ENCODE measurements at regions of chr22 and their contacts with region 1.

Region 1: DNA sequence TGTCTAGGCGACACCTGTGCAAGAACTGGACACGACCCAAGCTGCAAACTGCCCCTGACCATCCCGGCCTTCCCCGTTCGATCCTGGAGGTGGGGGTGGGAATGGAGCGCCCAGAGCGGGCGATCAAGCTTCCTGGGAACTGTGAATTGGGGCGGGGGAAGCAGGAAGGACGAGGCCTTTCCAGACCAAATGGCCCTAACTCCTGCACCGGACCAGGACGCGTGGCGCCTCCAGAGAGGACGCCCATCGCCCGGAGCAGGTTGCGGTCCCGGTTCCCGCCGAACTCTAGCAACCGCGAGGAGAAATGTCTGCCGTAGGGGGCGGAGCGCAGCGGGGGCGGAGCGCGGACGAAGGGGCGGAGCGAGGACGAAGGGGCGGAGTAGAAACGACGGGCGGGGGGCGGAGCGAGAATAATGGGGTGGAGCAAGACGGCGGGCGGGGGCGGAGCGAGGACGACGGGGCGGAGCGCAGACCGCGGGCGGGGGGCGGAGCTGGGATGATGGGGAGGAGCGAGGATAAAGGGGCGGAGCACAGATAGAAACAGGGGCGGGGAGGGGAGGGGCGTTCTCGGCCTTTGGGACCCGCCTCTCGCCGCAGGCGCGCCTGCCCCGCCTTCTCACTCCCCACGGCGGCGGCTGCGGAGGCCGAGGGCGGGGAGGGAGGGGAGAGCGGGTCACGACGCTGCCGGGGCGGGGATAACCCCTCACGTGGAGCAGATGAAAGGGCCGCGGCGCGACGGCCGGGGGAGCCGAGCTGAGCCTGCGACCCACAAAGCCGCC is at the start of gene ZNRF3:
- DNase-seq: peak; percentile 94
- H3K4me3 ChIP-seq: peak within 1 kb of the TSS; percentile 72
- H3K4me3 Mint-ChIP-seq: peak within 1 kb of the TSS; percentile 83
- H3K27ac Mint-ChIP-seq: peak within 1 kb of the TSS; percentile 93
- H3K4me1 ChIP-seq: peaks cover 35% of the 10 kb centered on the region
- H3K4me1 Mint-ChIP-seq: peaks cover 28% of the 10 kb centered on the region
- H3K27me3 ChIP-seq: no peaks in the 10 kb centered on the region
- H3K27me3 Mint-ChIP-seq: no peaks in the 10 kb centered on the region
- CTCF ChIP-seq: no peak
- total RNA-seq, gene ZNRF3: 37.9 and 41.1 TPM in 2 replicates

Region 2: GRCh38 chr22:28810821-28811491 is 72.1 kb before region 1 on chr22:
- CTCF ChIA-PET with region 1: no interaction called
- POLR2A ChIA-PET with region 1: no interaction called
- intact Hi-C with region 1: loop called (anchors 5 kb)
- DNase-seq: peak in 1 of 2 experiments; percentile 30
- H3K4me3 ChIP-seq: no peak overlapping the region
- H3K4me3 Mint-ChIP-seq: no peak overlapping the region
- H3K27ac Mint-ChIP-seq: peak overlapping the region; percentile 12
- H3K4me1 ChIP-seq: peaks cover 78% of the 10 kb centered on the region
- H3K4me1 Mint-ChIP-seq: peaks cover 33% of the 10 kb centered on the region
- H3K27me3 ChIP-seq: no peaks in the 10 kb centered on the region
- H3K27me3 Mint-ChIP-seq: no peaks in the 10 kb centered on the region
- CTCF ChIP-seq: no peak

Region 3: GRCh38 chr22:28855355-28856094 is 27.5 kb before region 1 on chr22:
- CTCF ChIA-PET with region 1: interaction called, 4 read pairs
- POLR2A ChIA-PET with region 1: no interaction called
- intact Hi-C with region 1: loop called (anchors 2 kb)
- DNase-seq: peak; percentile 52 to 73
- H3K4me3 ChIP-seq: no peak overlapping the region
- H3K4me3 Mint-ChIP-seq: no peak overlapping the region
- H3K27ac Mint-ChIP-seq: no peak overlapping the region
- H3K4me1 ChIP-seq: peaks cover 10% of the 10 kb centered on the region
- H3K4me1 Mint-ChIP-seq: peaks cover 10% of the 10 kb centered on the region
- H3K27me3 ChIP-seq: no peaks in the 10 kb centered on the region
- H3K27me3 Mint-ChIP-seq: no peaks in the 10 kb centered on the region
- CTCF ChIP-seq: peak; percentile 89 to 91

Region 4: GRCh38 chr22:28894807-28895206 is 11.7 kb after region 1 on chr22:
- CTCF ChIA-PET with region 1: interaction called, 6 read pairs
- POLR2A ChIA-PET with region 1: interaction called, 11 read pairs
- intact Hi-C with region 1: no loop called
- DNase-seq: no peak
- H3K4me3 ChIP-seq: no peak overlapping the region
- H3K4me3 Mint-ChIP-seq: no peak overlapping the region
- H3K27ac Mint-ChIP-seq: peak overlapping the region; percentile 32
- H3K4me1 ChIP-seq: peaks cover 36% of the 10 kb centered on the region
- H3K4me1 Mint-ChIP-seq: peaks cover 42% of the 10 kb centered on the region
- H3K27me3 ChIP-seq: no peaks in the 10 kb centered on the region
- H3K27me3 Mint-ChIP-seq: no peaks in the 10 kb centered on the region
- CTCF ChIP-seq: no peak

Region 5: DNA sequence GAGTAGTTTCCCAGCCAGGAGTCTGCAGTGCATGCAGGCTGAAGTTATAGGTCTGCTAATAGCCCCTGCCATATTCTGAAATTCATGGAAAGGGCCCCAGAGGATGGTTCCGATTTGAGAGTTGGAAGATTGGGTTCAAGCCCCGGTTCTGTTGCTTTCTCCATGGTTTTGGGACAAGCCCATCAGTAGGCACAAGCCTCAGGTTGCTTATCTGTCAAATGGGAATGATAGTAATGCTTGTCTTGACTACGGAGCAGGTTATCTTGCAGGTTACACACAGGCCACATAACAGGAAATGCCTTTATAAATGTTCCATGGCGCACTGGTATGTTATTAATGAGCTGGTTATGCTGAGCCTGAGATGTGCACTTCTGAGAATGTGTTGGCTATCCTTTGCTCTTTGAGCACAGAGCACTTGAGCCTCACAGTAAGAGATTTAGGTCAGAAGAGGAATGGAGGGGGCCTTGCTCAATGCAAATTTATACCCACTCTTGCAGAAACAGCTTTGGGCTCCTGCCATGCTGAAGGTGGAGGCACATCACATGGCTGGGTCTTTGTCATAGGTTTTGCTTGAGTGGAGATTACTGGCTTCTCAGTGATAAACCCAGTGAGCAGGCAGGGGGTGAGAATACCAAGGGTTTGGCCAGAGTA is 47.4 kb after region 1 on chr22:
- CTCF ChIA-PET with region 1: interaction called, 3 read pairs
- POLR2A ChIA-PET with region 1: interaction called, 7 read pairs
- intact Hi-C with region 1: loop called (anchors 5 kb)
- DNase-seq: no peak
- H3K4me3 ChIP-seq: no peak overlapping the region
- H3K4me3 Mint-ChIP-seq: peak overlapping the region; percentile 6
- H3K27ac Mint-ChIP-seq: no peak overlapping the region
- H3K4me1 ChIP-seq: peaks cover 80% of the 10 kb centered on the region
- H3K4me1 Mint-ChIP-seq: peaks cover 77% of the 10 kb centered on the region
- H3K27me3 ChIP-seq: no peaks in the 10 kb centered on the region
- H3K27me3 Mint-ChIP-seq: no peaks in the 10 kb centered on the region
- CTCF ChIP-seq: no peak

Region 6: DNA sequence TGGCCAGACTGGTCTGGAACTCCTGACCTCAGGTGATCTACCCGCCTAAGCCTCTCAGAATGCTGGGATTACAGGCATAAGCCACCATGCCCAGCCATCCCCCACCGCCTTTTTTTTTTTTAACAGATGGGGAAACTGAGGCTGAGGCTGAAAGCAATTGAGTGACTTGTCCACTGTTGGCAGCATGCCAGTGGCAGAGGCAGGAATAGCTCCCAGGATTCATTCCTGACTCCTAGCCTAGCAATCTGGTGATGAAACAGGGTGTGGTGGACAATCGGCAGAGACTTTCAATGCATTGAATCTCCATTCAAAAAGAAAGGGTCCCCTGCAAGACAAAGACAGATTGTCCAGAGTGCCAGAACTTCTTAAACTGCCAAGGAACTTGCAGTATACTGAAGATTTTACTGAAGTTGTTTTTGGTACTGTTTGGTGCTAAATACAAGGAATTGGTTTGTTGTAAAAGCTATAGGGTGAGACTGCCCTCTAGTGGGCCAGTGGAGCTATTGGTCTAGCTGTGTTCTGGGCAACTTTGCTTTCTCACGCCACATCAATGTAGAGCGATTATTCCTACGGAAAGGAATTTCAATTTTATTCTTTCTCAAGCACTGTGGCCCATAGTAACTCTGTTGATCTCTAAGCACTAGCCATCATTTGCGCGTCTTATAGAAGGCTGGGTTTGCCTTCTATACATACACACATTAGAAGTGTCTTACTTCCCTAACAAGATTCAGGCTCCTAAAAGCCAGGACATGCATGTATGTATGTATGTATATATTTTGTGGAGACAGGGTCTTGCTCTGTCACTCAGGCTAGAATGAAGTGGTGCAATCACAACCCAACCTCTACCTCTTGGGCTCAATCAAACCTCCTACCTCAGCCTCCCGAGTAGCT is 157.6 kb after region 1 on chr22:
- CTCF ChIA-PET with region 1: interaction called, 13 read pairs
- POLR2A ChIA-PET with region 1: interaction called, 3 read pairs
- intact Hi-C with region 1: loop called (anchors 1 kb)
- DNase-seq: peak; percentile 56 to 63
- H3K4me3 ChIP-seq: no peak overlapping the region
- H3K4me3 Mint-ChIP-seq: no peak overlapping the region
- H3K27ac Mint-ChIP-seq: no peak overlapping the region
- H3K4me1 ChIP-seq: peaks cover 38% of the 10 kb centered on the region
- H3K4me1 Mint-ChIP-seq: peaks cover 7% of the 10 kb centered on the region
- H3K27me3 ChIP-seq: no peaks in the 10 kb centered on the region
- H3K27me3 Mint-ChIP-seq: no peaks in the 10 kb centered on the region
- CTCF ChIP-seq: peak; percentile 90 to 93